GM13976 (cell line): ENCODE measurements at regions of chr3 and their contacts with region 1.

Region 1: DNA sequence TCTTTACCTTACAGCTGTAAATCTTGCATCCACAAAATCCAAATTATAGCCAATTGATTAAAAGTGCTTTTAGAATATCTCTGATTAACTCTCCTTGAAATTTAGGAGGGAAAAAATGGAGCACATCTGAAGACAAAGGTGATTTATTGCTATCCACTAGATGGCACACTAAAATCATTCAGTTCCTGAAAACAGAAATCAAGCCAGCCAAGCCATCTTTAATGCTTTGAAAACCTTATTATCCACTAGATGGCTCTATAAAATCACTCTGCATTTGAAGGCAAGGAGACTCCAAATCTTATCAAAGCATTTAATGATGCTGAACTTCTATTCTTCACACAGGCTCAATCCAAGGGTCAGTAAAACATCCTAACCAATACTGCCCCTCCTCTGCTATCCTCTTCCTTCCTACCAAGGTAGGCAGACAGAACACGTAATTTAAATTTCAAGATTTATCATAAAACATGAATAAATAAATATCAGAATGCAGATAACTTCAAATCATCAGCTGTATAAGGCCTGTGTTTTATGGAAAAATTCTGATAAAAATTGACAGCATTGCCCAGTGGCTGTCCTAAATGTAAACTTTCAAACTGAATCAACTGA is 48.4 kb downstream of the GOLIM4 start:
- DNase-seq: peak; percentile 47
- CTCF ChIP-seq: peak; percentile 68

Region 2: DNA sequence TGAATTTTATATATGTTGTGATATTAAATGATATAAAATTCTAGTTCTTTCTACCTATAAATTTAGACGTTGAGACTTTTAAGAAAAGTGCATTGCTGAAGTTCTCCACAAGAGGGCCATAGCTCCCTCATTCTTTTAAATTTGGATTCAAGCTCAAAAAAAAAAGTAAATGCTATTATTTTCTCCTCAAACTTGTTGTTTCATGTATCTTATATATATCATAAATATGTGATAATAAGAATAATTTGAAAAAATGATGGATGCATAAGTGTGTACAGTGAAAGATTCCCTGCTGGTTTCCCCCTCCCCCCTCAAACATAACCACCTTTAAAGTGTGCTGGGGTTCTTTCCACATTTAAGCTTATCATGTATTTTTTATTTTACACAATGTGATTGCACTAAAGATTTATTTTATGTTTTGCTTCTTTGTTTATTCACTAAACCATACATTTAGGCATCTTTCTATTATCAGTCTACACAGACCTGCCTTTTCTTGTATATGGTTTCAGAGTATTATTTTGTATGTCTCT is 817.8 kb after region 1 on chr3:
- in situ Hi-C with region 1: loop called (anchors 25 kb)
- DNase-seq: no peak
- CTCF ChIP-seq: peak; percentile 48